Breast epithelium (tissue), 4 donors: ENCODE measurements at regions of chr19 and their contacts with region 1.

Region 1: GRCh38 chr19:2273356-2274184 is 8.4 kb downstream of the PEAK3 start:
- DNase-seq: peak in 1 of 2 donors; percentile 82
- H3K4me3 ChIP-seq: peak overlapping the region; percentile 18 to 100 (median 20)
- H3K27ac ChIP-seq: peak overlapping the region; percentile 86 to 99
- H3K4me1 ChIP-seq: peaks cover 17 to 25% of the 10 kb centered on the region in 2 donors
- H3K27me3 ChIP-seq: no peaks in the 10 kb centered on the region
- CTCF ChIP-seq: peak; percentile 94 to 98 (median 98)
- POLR2A ChIP-seq: no peak

Region 2: GRCh38 chr19:1896508-1896907 is 377.1 kb before region 1 on chr19:
- intact Hi-C with region 1: loop called (anchors 5 kb)
- DNase-seq: no peak
- H3K4me3 ChIP-seq: no peak overlapping the region
- H3K27ac ChIP-seq: peak overlapping the region in 1 of 2 donors; percentile 48
- H3K4me1 ChIP-seq: no peaks in the 10 kb centered on the region
- H3K27me3 ChIP-seq: no peaks in the 10 kb centered on the region
- CTCF ChIP-seq: no peak
- POLR2A ChIP-seq: no peak

Region 3: DNA sequence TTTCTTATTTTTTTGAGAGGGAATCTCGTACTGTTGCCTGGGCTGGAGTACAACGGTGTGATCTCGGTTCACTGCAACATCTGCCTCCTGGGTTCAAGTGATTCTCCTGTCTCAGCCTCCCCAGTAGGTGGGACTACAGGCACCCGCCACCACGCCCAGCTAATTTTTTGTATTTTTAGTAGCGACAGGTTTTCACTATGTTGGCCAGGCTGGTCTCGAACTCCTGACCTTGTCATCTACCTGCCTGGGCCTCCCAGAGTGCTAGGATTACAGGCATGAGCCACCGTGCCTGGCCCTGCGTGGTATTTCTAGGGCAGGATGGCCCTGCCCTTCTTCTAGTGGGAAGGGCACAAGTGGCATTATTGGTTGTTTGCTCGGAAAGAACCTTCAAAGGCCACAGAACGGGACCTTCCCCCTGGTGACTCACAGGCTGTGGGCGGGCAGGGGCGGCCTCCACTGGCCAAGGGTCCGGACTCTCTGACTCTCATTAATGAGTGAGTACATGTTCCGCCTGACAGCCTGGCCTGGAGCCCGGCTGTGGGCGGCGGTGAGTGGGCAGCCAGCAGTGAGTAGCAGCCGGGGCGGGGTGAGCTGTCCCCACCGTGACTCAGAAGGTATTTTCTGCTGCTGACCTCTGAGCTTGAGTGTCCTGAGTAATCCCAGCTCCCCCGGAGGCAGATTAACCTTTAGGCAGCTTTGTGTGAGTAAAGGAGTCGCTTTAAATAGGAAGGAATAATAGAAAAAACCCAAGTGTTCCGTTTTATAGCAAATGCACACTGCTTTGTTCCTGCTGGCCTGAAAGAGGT is 104.7 kb before region 1 on chr19:
- intact Hi-C with region 1: loop called (anchors 10 kb)
- DNase-seq: peak; percentile 95 to 96
- H3K4me3 ChIP-seq: peak overlapping the region in 2 of 3 donors; percentile 3 to 48
- H3K27ac ChIP-seq: peak overlapping the region; percentile 91 to 92
- H3K4me1 ChIP-seq: peaks cover 11 to 28% of the 10 kb centered on the region in 2 donors
- H3K27me3 ChIP-seq: no peaks in the 10 kb centered on the region
- CTCF ChIP-seq: no peak
- POLR2A ChIP-seq: no peak

Region 4: GRCh38 chr19:2236314-2237050 is 37.1 kb before region 1 on chr19 and contains the starts of genes PLEKHJ1 and SF3A2:
- intact Hi-C with region 1: loop called (anchors 5 kb)
- DNase-seq: peak; percentile 96 to 97
- H3K4me3 ChIP-seq: peak within 1 kb of the TSS; percentile 84 to 95 (median 85)
- H3K27ac ChIP-seq: peak within 1 kb of the TSS; percentile 99
- H3K4me1 ChIP-seq: peaks cover 10 to 37% of the 10 kb centered on the region in 2 donors
- H3K27me3 ChIP-seq: no peaks in the 10 kb centered on the region
- CTCF ChIP-seq: peak; percentile 97 to 100 (median 99)
- POLR2A ChIP-seq: peak; percentile 58
- total RNA-seq, gene PLEKHJ1: 44.6 to 52.8 (median 47.4) TPM
- total RNA-seq, gene SF3A2: 32.6 to 38.0 (median 33.3) TPM